HEK293 (cell line): ENCODE measurements at regions of chr13 and their contacts with region 1.

Region 1: DNA sequence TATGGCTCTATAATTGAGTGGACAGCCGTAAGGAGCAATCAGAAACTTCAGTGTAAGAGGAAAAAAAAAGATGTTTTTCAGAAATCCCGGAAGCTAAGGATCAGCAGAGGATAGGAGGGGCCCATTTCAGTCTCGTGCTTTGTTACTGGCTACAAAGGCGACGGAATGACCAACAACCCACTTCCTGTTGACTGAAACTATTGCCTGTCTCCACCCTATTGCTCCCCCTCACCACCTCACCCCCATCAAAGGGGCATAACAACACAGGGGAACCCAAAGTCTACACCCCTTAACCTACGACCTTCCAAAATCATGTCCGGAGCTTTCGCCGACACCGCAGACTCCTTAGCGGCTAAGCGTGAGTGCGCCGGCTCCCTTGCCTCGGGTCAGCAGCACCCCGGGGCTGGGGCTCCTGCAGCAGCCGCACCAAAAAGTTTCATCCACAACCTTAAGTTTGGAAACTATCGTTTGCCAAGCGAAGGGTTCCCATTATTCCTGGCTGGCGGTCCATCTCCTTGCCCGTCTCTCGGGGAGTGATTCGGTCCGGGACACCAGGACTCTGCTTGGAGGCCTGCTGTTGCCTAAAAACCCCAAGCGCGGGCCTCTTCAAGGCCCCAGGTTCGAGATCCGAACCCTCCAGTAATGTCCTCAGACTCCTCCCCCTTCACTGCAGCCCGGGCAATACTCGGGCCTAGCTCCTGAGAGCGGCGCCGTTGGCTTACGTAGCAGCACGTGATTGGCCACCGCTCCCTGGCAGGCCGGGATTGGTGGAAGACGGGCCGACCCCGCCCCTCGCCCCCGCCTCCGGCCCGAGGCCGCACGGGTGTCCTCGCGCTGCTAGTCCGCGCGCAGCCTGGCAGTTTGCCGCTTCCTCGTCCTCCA is at the start of gene TPP2:
- H3K4me3 ChIP-seq: peak within 1 kb of the TSS; percentile 94
- H3K27ac ChIP-seq: peak within 1 kb of the TSS; percentile 78
- H3K4me1 ChIP-seq: peaks cover 2% of the 10 kb centered on the region; the same call in 1 of the 2 replicates
- CTCF ChIP-seq: no peak

Region 2: GRCh38 chr13:102580552-102581169 is 15.7 kb before region 1 on chr13:
- CTCF ChIA-PET with region 1: interaction called, 35 read pairs
- POLR2A ChIA-PET with region 1: no interaction called
- H3K4me3 ChIP-seq: no peak overlapping the region
- H3K27ac ChIP-seq: no peak overlapping the region
- H3K4me1 ChIP-seq: no peaks in the 10 kb centered on the region
- CTCF ChIP-seq: no peak

Region 3: GRCh38 chr13:102724923-102725322 is 128.5 kb after region 1 on chr13:
- CTCF ChIA-PET with region 1: interaction called, 15 read pairs
- POLR2A ChIA-PET with region 1: interaction called, 4 read pairs
- H3K4me3 ChIP-seq: no peak overlapping the region
- H3K27ac ChIP-seq: no peak overlapping the region
- H3K4me1 ChIP-seq: no peaks in the 10 kb centered on the region
- CTCF ChIP-seq: no peak

Region 4: GRCh38 chr13:102773441-102774215 is 177.2 kb after region 1 on chr13 and contains the start of gene TEX30:
- CTCF ChIA-PET with region 1: interaction called, 3 read pairs
- POLR2A ChIA-PET with region 1: interaction called, 12 read pairs
- H3K4me3 ChIP-seq: peak within 1 kb of the TSS; percentile 71
- H3K27ac ChIP-seq: peak within 1 kb of the TSS; percentile 69
- H3K4me1 ChIP-seq: peaks cover 3% of the 10 kb centered on the region; the same call in 1 of the 2 replicates
- CTCF ChIP-seq: no peak

Region 5: GRCh38 chr13:102800145-102801041 is 204.0 kb after region 1 on chr13:
- CTCF ChIA-PET with region 1: no interaction called
- POLR2A ChIA-PET with region 1: interaction called, 17 read pairs
- H3K4me3 ChIP-seq: peak overlapping the region; percentile 94
- H3K27ac ChIP-seq: peak overlapping the region; percentile 72
- H3K4me1 ChIP-seq: no peaks in the 10 kb centered on the region
- CTCF ChIP-seq: peak; percentile 80

Region 6: DNA sequence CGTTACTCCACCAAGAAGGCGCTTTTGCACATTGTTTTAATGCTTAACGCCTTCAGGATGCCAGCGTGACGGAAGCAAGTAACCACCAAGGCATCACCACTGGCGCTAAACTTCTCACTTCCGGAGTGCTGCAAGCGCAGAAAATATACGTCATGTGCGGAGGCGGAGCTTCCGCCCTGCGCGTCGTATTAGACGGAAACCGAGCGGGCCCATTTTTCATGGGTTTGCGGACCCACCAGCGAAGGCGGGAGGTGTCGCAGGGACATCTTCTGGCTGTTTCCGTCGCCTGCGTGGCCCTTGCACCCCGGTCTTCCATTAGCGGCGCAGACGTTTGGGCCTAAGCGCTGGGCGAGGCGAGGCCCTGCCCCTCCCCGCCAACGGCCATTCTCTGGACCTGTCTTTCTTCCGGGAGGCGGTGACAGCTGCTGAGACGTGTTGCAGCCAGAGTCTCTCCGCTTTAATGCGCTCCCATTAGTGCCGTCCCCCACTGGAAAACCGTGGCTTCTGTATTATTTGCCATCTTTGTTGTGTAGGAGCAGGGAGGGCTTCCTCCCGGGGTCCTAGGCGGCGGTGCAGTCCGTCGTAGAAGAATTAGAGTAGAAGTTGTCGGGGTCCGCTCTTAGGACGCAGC is 249.4 kb after region 1 on chr13 and contains the start of gene ERCC5:
- CTCF ChIA-PET with region 1: interaction called, 9 read pairs
- POLR2A ChIA-PET with region 1: interaction called, 33 read pairs
- H3K4me3 ChIP-seq: peak within 1 kb of the TSS; percentile 97
- H3K27ac ChIP-seq: peak within 1 kb of the TSS; percentile 72
- H3K4me1 ChIP-seq: no peaks in the 10 kb centered on the region
- CTCF ChIP-seq: no peak; the same call in 1 of the 2 replicates